Left cardiac atrium (tissue), 4 donors: ENCODE measurements at regions of chr14 and their contacts with region 1.

Region 1: DNA sequence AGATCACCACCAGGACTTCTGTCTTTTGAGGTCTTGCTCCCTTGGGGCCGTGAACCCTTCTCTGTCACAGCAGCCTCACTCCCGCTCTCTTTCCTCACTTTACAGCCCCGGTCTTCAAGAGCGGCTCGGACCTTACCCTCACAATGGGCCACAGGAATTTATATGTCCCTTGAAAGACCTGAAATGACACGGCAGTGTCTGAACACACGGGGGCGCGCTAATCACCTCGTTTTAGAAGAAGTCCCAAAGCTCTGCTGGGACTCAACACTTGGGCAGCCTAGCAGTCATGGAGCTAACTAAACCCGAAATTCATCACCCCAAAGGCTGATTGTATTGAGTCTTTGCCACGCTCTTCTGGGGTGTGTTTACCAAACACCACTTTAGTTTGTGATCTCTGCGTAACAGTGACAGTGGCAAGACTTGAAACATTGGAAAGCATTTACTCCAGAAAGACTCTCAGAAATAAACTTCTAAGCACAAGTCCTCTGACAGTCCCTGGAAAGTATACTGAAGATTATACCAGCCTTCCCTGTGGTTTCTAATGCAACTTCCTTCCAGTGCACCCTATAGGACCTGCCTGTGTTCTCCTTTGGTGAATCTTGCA is 29.0 kb downstream of the SERPINA11 start:
- DNase-seq: peak; percentile 71
- ATAC-seq: peak in 1 of 2 donors; percentile 44

Region 2: GRCh38 chr14:94307410-94307992 is 116.1 kb before region 1 on chr14:
- intact Hi-C with region 1: no loop called
- DNase-seq: no peak
- ATAC-seq: no peak

Region 3: GRCh38 chr14:94548999-94549985 is 125.7 kb after region 1 on chr14:
- intact Hi-C with region 1: loop called (anchors 5 to 10 kb)
- DNase-seq: peak; percentile 54
- ATAC-seq: peak; percentile 78 to 84